Activated CD4-positive, alpha-beta memory T cell treated with anti-CD3 and anti-CD28 coated beads for 36 hours (primary cell): ENCODE measurements at regions of chrX and their contacts with region 1.

Region 1: DNA sequence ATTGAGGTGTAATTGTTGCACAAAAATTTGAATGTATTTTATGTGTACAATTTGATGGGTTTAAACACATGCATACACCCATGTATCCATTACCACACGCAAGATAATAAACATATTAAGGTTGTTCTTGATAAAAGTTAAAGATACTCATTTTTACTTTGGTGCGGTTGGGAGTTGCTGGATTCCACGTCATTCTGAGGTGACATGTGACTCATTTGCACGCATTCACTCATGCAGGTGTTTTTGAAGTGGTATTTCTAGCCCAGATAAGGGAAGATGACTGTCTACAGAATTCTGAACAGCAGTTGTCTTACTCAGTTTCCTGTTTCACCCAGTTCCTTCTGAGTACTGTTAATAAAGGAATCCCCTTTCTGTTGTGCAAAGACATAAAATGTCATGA is 142.0 kb downstream of the RTL3 start:
- DNase-seq: peak; percentile 77
- H3K4me3 Mint-ChIP-seq: no peak overlapping the region
- H3K27ac Mint-ChIP-seq: peak overlapping the region; percentile 84
- H3K4me1 Mint-ChIP-seq: peaks cover 45% of the 10 kb centered on the region
- H3K27me3 Mint-ChIP-seq: no peaks in the 10 kb centered on the region

Region 2: GRCh38 chrX:78103623-78104446 is 413.3 kb before region 1 on chrX and contains the start of gene PGK1:
- CTCF ChIA-PET with region 1: no interaction called
- POLR2A ChIA-PET with region 1: interaction called, 3 read pairs
- intact Hi-C with region 1: loop called (anchors 10 kb)
- DNase-seq: peak; percentile 96
- H3K4me3 Mint-ChIP-seq: peak within 1 kb of the TSS; percentile 93
- H3K27ac Mint-ChIP-seq: peak within 1 kb of the TSS; percentile 90
- H3K4me1 Mint-ChIP-seq: peaks cover 40% of the 10 kb centered on the region
- H3K27me3 Mint-ChIP-seq: no peaks in the 10 kb centered on the region
- total RNA-seq, gene PGK1: 908 to 924 TPM

Region 3: DNA sequence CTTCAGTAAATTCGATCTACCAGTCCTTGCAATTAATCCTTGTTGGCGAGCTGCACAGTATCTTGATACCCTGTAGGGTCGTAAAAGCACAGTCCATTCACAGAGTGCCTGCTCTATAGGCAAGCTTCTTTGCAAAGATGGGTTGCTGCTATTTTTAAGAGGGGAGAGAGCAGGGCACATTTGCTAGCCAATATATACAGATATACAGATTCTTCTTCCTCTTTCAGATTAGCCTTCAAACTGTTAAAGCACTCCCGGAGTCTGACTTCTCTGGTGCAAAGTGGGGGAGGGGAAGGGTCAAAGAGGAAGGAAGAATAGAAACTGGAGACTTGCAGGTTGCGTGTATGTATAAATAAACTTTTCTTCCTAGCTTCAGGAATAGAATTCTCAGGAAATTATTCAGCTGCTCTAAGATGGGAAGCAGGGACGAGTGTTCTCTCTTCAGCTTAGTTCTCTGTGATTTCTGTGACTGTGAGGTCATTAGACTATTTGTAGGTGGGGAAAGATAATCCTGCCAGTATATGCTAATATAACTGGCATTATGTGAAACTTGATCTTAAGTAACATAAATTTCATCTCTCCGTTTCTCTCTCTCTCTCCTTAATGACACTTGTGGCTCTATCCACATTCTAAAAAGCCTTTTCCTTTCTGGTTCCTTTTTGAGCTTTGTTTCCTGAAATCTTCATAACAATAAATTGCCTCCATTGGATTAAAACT is 189.6 kb before region 1 on chrX and contains the start of gene CYSLTR1:
- CTCF ChIA-PET with region 1: no interaction called
- POLR2A ChIA-PET with region 1: no interaction called
- intact Hi-C with region 1: loop called (anchors 1 kb)
- DNase-seq: no peak
- H3K4me3 Mint-ChIP-seq: peak within 1 kb of the TSS; percentile 72
- H3K27ac Mint-ChIP-seq: peak within 1 kb of the TSS; percentile 64
- H3K4me1 Mint-ChIP-seq: peaks cover 57% of the 10 kb centered on the region
- H3K27me3 Mint-ChIP-seq: no peaks in the 10 kb centered on the region
- total RNA-seq, gene CYSLTR1: 1.8 to 2.5 TPM

Region 4: GRCh38 chrX:78527263-78527662 is 10.1 kb after region 1 on chrX:
- CTCF ChIA-PET with region 1: interaction called, 3 read pairs
- POLR2A ChIA-PET with region 1: interaction called, 3 read pairs
- intact Hi-C with region 1: loop called (anchors 1 kb)
- DNase-seq: peak; percentile 42
- H3K4me3 Mint-ChIP-seq: no peak overlapping the region
- H3K27ac Mint-ChIP-seq: peak overlapping the region; percentile 49
- H3K4me1 Mint-ChIP-seq: peaks cover 31% of the 10 kb centered on the region
- H3K27me3 Mint-ChIP-seq: no peaks in the 10 kb centered on the region

Region 5: GRCh38 chrX:78754917-78755316 is 237.8 kb after region 1 on chrX:
- CTCF ChIA-PET with region 1: no interaction called
- POLR2A ChIA-PET with region 1: no interaction called
- intact Hi-C with region 1: no loop called
- DNase-seq: no peak
- H3K4me3 Mint-ChIP-seq: no peak overlapping the region
- H3K27ac Mint-ChIP-seq: no peak overlapping the region
- H3K4me1 Mint-ChIP-seq: no peaks in the 10 kb centered on the region
- H3K27me3 Mint-ChIP-seq: no peaks in the 10 kb centered on the region

Region 6: GRCh38 chrX:79081895-79082512 is 564.9 kb after region 1 on chrX:
- CTCF ChIA-PET with region 1: no interaction called
- POLR2A ChIA-PET with region 1: no interaction called
- intact Hi-C with region 1: loop called (anchors 5 kb)
- DNase-seq: peak; percentile 30
- H3K4me3 Mint-ChIP-seq: peak overlapping the region; percentile 69
- H3K27ac Mint-ChIP-seq: peak overlapping the region; percentile 79
- H3K4me1 Mint-ChIP-seq: peaks cover 41% of the 10 kb centered on the region
- H3K27me3 Mint-ChIP-seq: no peaks in the 10 kb centered on the region

Region 7: DNA sequence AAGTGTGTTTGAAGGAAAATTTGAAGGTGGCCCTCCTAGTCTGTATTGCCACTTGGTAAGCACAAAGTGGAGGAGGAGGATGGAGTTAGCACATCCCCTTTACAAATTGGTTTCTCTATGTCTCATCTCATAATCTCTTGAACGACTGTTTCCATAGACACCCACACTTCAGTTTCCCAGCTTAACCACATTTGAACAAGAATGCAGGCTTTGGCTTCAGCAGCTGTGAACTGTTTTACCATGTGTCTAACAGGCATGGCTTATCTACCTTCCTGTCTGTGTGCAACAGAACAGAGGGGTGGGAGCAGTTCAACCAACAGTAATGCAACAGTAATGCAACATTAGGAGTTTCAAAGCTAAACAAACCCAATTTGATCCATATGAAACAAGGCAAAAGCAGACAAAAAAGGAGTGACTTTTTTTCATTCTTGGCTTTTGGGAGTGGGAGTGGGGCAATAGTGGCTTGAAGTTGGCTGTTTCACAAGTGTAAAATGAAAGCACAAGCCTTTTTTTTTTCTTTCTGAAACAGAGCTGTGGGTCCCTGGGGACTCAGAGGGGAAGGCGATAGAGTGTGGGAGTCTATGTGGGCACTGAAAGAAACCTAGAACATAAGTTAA is 742.1 kb after region 1 on chrX:
- CTCF ChIA-PET with region 1: no interaction called
- POLR2A ChIA-PET with region 1: no interaction called
- intact Hi-C with region 1: loop called (anchors 5 kb)
- DNase-seq: peak; percentile 58
- H3K4me3 Mint-ChIP-seq: peak overlapping the region; percentile 57
- H3K27ac Mint-ChIP-seq: peak overlapping the region; percentile 91
- H3K4me1 Mint-ChIP-seq: peaks cover 81% of the 10 kb centered on the region
- H3K27me3 Mint-ChIP-seq: no peaks in the 10 kb centered on the region